OCI-LY7 (cell line): ENCODE measurements at regions of chr18 and their contacts with region 1.

Region 1: GRCh38 chr18:21064347-21064746 is 47.3 kb downstream of the ROCK1 start:
- DNase-seq: no peak
- H3K4me3 ChIP-seq: no peak overlapping the region
- H3K27ac ChIP-seq: no peak overlapping the region
- H3K4me1 ChIP-seq: no peaks in the 10 kb centered on the region
- CTCF ChIP-seq: no peak

Region 2: GRCh38 chr18:21031845-21032244 is 32.5 kb before region 1 on chr18:
- CTCF ChIA-PET with region 1: no interaction called
- POLR2A ChIA-PET with region 1: no interaction called
- intact Hi-C with region 1: loop called (anchors 5 kb)
- DNase-seq: no peak
- H3K4me3 ChIP-seq: no peak overlapping the region
- H3K27ac ChIP-seq: no peak overlapping the region
- H3K4me1 ChIP-seq: no peaks in the 10 kb centered on the region
- CTCF ChIP-seq: no peak

Region 3: GRCh38 chr18:21085579-21086166 is 21.3 kb after region 1 on chr18:
- CTCF ChIA-PET with region 1: no interaction called
- POLR2A ChIA-PET with region 1: no interaction called
- intact Hi-C with region 1: no loop called
- DNase-seq: no peak
- H3K4me3 ChIP-seq: no peak overlapping the region
- H3K27ac ChIP-seq: no peak overlapping the region
- H3K4me1 ChIP-seq: no peaks in the 10 kb centered on the region
- CTCF ChIP-seq: no peak